HCT116 (cell line): ENCODE measurements at regions of chr9 and their contacts with region 1.

Region 1: GRCh38 chr9:127199001-127199791 is 65.4 kb upstream of the GARNL3 start:
- DNase-seq: peak; percentile 67
- ATAC-seq: peak; percentile 81
- H3K4me3 ChIP-seq: no peak overlapping the region
- H3K27ac ChIP-seq: no peak overlapping the region
- H3K4me1 ChIP-seq: peaks cover 19 to 28% of the 10 kb centered on the region in 2 experiments
- H3K27me3 ChIP-seq: no peaks in the 10 kb centered on the region
- CTCF ChIP-seq: peak; percentile 80 to 96 (median 87)
- POLR2A ChIP-seq: no peak
- RAD21 ChIP-seq: peak; percentile 99

Region 2: DNA sequence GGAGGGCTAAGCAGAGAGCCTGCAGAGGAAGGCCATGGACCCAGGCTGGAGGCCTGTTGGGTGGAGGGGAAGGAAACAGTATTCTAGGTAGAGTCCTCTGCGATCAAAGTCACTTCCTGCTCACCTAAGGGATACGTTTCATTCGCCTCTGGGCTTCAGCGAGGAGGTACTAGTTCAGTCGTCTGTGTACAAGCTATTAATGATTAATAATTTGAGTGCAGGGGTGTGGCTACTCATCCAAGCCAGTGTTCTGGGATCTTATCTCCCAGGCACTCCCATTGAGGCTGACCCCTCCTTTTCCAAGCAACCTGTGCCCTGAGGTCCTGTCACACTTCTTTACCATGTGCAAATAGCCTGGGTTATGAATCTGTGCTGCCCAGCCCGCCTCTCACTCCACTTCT is 259.4 kb before region 1 on chr9:
- CTCF ChIA-PET with region 1: interaction called, 36 read pairs
- POLR2A ChIA-PET with region 1: interaction called, 3 read pairs
- RAD21 ChIA-PET with region 1: interaction called, 5 to 6 read pairs
- intact Hi-C with region 1: loop called (anchors 1 kb)
- DNase-seq: no peak
- ATAC-seq: no peak
- H3K4me3 ChIP-seq: no peak overlapping the region
- H3K27ac ChIP-seq: no peak overlapping the region
- H3K4me1 ChIP-seq: no peaks in the 10 kb centered on the region
- H3K27me3 ChIP-seq: no peaks in the 10 kb centered on the region
- CTCF ChIP-seq: no peak
- POLR2A ChIP-seq: no peak
- RAD21 ChIP-seq: no peak

Region 3: DNA sequence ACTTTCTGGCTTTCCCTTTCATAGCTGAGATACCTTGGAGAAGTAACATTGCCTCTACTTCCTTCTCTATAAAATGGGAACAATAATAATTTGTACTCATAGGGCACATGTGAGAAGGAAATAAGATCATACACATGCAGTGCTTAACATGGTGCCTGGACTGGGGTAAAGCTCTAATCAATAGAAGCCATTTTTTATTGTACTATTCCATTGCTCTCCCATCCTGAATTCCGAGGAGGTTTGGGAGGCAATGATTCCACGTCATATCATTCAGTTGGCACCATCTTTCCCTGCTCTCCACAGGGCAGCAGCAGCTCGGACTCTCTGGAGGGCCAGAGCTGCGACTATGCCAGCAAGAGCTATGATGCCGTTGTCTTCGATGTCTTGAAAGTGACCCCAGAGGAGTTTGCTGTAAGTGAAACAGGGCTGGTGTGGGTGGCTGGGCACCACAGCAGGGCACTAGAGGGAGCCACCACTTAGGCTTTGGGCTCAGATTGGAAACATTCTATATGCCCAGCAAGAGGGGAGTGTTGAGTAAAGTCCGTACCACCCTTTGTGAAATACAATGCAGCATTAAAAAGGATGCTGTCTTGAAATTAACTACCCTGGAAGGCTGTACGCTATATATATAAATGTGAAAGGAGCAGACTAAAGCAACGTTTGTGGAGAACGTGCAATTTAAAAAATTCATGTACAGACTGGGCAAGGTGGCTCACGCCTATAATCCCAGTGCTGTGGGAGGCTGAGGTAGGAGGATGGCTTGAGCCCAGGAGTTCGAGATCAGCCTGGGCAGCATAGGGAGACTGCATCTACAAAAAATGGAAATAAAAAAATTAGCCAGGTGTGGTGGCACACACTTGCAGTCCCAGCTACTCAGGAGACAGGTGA is 233.4 kb before region 1 on chr9:
- CTCF ChIA-PET with region 1: interaction called, 25 read pairs
- POLR2A ChIA-PET with region 1: no interaction called
- RAD21 ChIA-PET with region 1: interaction called, 4 to 5 read pairs
- intact Hi-C with region 1: loop called (anchors 1 kb)
- DNase-seq: peak; percentile 38
- ATAC-seq: peak; percentile 99
- H3K4me3 ChIP-seq: no peak overlapping the region
- H3K27ac ChIP-seq: no peak overlapping the region
- H3K4me1 ChIP-seq: peaks cover 0 to 10% of the 10 kb centered on the region in 2 experiments; a peak in 1 of 4 replicates
- H3K27me3 ChIP-seq: no peaks in the 10 kb centered on the region
- CTCF ChIP-seq: peak; percentile 89 to 97 (median 97)
- POLR2A ChIP-seq: no peak
- RAD21 ChIP-seq: peak; percentile 98

Region 4: DNA sequence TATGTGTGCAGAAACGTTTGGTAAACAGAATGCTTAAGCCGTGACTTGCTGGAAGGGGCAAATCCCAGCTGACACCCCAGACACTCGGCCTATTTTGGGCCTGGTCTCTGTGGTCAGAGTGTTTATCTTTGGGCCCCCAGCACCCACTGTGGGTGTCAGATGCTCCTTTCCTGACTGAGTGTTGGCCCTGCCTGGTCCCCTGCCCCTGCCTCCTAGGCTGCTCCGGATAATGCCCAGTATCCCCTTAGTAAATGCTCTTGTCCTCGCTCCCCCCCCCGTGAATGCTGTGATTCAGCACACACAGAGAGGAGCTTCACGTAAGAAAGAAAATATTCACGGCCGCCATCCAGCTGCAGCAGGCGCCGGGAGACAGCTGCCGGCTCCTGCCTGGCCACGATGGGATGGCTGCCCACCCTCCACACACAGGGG is 65.4 kb before region 1 on chr9:
- CTCF ChIA-PET with region 1: no interaction called
- POLR2A ChIA-PET with region 1: no interaction called
- RAD21 ChIA-PET with region 1: no interaction called
- intact Hi-C with region 1: loop called (anchors 2 kb)
- DNase-seq: no peak
- ATAC-seq: no peak
- H3K4me3 ChIP-seq: no peak overlapping the region
- H3K27ac ChIP-seq: no peak overlapping the region
- H3K4me1 ChIP-seq: peaks cover 22 to 31% of the 10 kb centered on the region in 2 experiments
- H3K27me3 ChIP-seq: no peaks in the 10 kb centered on the region
- CTCF ChIP-seq: no peak
- POLR2A ChIP-seq: no peak
- RAD21 ChIP-seq: no peak